Adrenal gland (tissue), 19 donors: ENCODE measurements at regions of chr18 and their contacts with region 1.

Region 1: DNA sequence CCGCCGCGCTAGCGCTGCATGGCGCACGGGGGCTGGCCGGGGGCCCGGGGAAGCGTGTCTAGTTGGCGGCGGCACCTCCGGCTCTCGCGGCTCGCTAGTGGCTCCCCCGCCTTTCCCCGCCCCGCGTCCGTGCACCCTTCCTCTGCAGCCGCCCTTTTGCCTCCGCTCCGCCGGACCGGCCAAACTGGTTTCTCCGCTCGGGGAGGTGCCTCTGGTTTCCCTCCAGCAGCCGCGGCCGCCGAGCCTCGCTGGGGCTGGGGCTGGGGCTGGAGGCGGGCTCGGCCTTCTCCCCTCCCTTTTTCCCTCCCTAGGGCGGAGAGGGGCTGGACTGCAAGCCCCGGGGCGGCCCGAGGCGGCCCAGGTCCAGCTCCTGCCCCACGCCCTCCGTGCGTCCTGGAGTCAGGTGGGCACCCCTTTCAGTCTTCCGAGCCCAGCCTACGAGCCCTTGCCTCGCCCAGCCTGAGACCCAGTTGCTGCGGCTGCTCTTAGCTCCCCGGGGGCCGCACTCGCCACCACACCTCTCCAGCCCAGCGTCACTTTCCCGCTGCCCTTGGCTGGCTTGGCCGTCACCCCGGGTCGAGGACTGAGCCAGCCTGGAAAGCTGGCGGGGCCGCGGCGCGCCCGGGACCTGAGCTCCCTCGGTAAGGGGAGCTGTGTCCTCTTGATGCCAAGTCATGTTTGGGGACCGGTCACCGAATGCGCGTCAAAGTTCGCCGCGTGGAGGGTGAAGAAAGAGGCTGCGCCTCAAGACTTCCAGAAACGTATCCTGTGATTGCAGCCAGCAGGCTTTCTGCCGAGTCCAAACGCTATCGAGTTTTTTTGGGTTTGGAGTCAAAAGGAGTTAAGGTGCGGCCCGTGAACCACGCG is at the start of gene ATP8B1:
- DNase-seq: peak; percentile 80 to 84 (median 82)
- H3K4me3 ChIP-seq: peak within 1 kb of the TSS; percentile 13 to 85 (median 60)
- H3K27ac ChIP-seq: peak within 1 kb of the TSS; percentile 28 to 88 (median 87)
- H3K4me1 ChIP-seq: peaks cover 13 to 34% of the 10 kb centered on the region in 2 donors
- H3K27me3 ChIP-seq: no peaks in the 10 kb centered on the region
- CTCF ChIP-seq: peak in 3 of 6 experiments; percentile 10 to 27 (median 19)
- POLR2A ChIP-seq: peak; percentile 29 to 78
- total RNA-seq, gene ATP8B1: 11.3 to 42.5 (median 15.5) TPM

Region 2: DNA sequence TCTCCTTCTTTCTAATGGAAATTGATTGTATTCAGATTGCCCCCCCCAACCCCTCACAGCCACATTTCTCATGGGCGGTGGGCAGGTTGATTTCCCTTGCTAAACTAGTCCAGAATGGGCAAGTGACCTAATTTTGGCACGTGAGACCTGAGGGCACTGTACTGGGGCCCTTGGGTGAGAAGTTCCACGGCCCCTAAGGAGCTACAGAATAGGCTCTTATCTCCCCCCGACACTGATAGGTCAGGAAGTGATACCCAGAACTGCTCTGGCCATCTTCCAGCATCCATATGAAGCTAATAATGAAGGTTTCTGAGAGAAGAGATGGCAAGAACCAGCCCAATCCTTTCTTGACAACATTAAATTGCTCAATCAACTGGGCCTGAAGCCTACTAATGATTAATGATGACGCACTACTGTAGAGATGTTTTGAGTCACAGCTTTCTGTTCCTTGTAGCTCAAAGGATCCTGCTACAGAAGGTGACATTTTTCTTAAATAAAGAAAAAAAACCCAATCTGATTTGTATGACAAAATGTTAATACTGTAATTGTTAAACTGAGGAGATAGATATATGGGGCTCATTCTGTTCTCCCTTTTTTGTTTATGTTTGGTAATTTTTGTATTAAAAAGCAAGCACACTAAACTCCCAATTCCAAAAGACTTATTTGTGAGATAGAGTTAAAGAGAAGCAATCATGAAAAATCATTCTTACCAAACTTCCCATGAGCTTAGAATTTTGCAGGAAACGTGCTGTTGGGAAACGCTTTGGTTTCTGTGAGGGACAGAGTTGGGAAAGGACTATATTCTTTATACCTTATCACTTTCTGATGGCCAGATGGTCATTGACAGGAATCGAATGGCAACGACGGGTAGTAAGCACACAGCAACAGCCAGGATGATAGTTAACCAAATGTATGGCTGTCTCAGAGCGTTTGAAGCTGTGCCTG is 153.5 kb before region 1 on chr18:
- intact Hi-C with region 1: loop called in 1 of 2 experiments (anchors 10 kb)
- DNase-seq: peak in 5 of 7 donors; percentile 30 to 56 (median 44)
- H3K4me3 ChIP-seq: no peak overlapping the region
- H3K27ac ChIP-seq: peak overlapping the region in 4 of 5 donors; percentile 35 to 67 (median 54)
- H3K4me1 ChIP-seq: peaks cover 0 to 11% of the 10 kb centered on the region in 2 donors
- H3K27me3 ChIP-seq: no peaks in the 10 kb centered on the region
- CTCF ChIP-seq: no peak
- POLR2A ChIP-seq: no peak